GM13977 (cell line): ENCODE measurements at regions of chr7 and their contacts with region 1.

Region 1: DNA sequence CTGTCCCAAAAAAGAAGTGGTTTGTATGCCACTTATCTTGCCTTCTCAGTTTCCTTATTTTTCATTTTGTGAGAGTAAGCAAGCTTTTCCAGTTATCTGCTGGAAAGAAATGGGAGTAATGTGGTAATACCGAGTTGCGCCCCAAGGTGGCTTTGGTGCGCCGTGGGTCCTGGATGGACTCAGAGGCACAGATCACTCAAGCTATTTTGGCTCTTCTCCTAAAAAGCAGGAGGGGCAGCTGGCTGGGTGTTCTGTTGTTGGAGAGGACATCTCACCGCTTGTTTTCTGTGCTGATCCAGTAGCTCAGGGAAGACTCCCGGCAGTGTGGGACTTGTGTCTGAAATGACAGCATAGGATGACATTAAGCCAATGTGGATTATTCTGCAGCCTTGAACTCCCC is 16.4 kb downstream of the PRKRIP1 start:
- DNase-seq: no peak
- CTCF ChIP-seq: peak; percentile 56

Region 2: GRCh38 chr7:102024769-102025391 is 387.7 kb before region 1 on chr7:
- in situ Hi-C with region 1: no loop called
- DNase-seq: no peak
- CTCF ChIP-seq: no peak

Region 3: DNA sequence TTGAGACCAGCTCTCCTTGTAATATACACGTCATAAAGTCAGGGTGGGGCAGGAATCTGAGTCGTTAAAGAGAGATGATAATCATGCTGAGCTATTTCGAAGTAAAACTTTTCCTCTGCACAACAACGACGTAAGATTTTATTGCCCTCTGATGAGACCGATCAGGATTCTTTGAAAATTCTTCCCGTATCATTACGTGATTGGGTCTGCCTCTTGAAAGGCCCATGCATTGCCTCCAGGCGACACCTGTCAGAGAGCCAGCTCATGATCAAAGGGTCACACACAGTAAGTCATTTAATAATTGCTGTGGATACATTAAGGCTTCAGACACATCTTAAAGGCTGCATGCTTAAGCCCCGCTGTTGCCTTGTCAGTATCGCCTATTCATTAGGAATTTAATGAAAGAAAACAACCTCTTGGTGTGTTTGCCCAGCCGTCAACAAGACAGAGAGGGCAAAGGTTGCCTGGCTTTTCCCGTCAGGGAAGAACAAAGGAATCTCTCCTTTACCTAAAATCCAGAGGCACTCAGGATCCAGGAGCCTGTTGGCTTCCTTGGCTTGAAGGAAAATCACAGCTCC is 314.9 kb before region 1 on chr7:
- in situ Hi-C with region 1: no loop called
- DNase-seq: no peak
- CTCF ChIP-seq: no peak

Region 4: GRCh38 chr7:102444961-102445673 is 32.6 kb after region 1 on chr7:
- in situ Hi-C with region 1: loop called (anchors 5 kb)
- DNase-seq: peak; percentile 80
- CTCF ChIP-seq: no peak